Activated naive CD4-positive, alpha-beta T cell treated with anti-CD3 and anti-CD28 coated beads, Interleukin-2, amount 10 ng/mL, durations not matched to agents 7 days and 5 days (primary cell): ENCODE measurements at regions of chr14 and their contacts with region 1.

Region 1: DNA sequence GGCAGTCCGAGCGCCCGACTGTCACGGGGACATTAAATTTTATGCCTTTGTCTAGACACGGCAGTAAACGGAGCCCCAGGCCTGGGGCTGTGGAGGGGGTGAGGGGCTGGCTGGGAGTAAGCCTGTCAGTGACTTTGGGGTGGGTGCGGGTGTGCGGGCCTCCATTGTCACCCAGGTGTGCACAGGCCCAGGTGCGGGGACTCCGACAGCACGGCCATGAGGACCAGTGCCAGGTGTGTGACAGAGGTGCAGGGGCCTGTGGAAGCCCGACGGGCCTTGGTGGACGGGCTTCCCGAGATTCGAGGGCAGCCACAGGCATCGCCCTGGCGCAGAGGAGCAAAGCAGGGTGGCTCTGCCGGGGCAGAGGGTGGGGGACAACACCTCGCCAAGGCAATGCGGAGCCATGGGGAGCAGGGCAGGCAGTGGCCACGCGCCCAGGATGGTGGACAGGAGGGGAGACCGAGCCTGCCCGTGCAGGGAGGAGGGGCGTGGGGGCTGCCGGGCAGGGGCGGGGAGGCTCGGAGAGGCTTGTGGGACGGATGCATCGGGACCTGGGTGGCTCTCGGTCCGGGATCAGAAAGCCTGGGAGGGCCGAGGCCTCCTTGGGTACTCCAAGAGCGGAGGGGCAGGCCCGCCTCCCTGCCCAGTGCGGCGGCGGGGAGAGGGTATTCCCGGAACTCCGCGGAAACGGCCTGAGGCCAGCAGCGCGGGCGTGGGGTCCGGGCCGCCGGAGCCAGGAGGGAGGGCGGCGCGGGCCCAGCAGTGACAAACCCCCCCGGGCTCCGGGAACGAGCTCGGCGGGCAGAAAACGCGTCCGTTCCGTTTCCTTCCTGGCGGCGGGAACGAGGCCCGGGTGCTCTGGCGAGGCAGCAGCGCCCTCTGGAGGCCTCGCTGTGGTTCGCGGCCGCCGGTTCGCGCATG is 1.5 kb downstream of the TMEM121 start:
- DNase-seq: peak; percentile 86
- H3K4me3 Mint-ChIP-seq: peak overlapping the region; percentile 69
- H3K27ac Mint-ChIP-seq: no peak overlapping the region
- H3K4me1 Mint-ChIP-seq: peaks cover 31% of the 10 kb centered on the region
- H3K27me3 Mint-ChIP-seq: peaks cover 63% of the 10 kb centered on the region

Region 2: GRCh38 chr14:105374383-105374782 is 153.5 kb before region 1 on chr14:
- CTCF ChIA-PET with region 1: interaction called, 12 read pairs
- DNase-seq: no peak
- H3K4me3 Mint-ChIP-seq: no peak overlapping the region
- H3K27ac Mint-ChIP-seq: no peak overlapping the region
- H3K4me1 Mint-ChIP-seq: peaks cover 23% of the 10 kb centered on the region
- H3K27me3 Mint-ChIP-seq: no peaks in the 10 kb centered on the region

Region 3: GRCh38 chr14:105388110-105388951 is 139.6 kb before region 1 on chr14:
- CTCF ChIA-PET with region 1: no interaction called
- DNase-seq: no peak
- H3K4me3 Mint-ChIP-seq: no peak overlapping the region
- H3K27ac Mint-ChIP-seq: no peak overlapping the region
- H3K4me1 Mint-ChIP-seq: peaks cover 15% of the 10 kb centered on the region
- H3K27me3 Mint-ChIP-seq: no peaks in the 10 kb centered on the region

Region 4: GRCh38 chr14:105480952-105481801 is 46.7 kb before region 1 on chr14:
- CTCF ChIA-PET with region 1: interaction called, 19 read pairs
- DNase-seq: peak; percentile 89
- H3K4me3 Mint-ChIP-seq: peak overlapping the region; percentile 47
- H3K27ac Mint-ChIP-seq: peak overlapping the region; percentile 93
- H3K4me1 Mint-ChIP-seq: peaks cover 57% of the 10 kb centered on the region
- H3K27me3 Mint-ChIP-seq: peaks cover 68% of the 10 kb centered on the region

Region 5: DNA sequence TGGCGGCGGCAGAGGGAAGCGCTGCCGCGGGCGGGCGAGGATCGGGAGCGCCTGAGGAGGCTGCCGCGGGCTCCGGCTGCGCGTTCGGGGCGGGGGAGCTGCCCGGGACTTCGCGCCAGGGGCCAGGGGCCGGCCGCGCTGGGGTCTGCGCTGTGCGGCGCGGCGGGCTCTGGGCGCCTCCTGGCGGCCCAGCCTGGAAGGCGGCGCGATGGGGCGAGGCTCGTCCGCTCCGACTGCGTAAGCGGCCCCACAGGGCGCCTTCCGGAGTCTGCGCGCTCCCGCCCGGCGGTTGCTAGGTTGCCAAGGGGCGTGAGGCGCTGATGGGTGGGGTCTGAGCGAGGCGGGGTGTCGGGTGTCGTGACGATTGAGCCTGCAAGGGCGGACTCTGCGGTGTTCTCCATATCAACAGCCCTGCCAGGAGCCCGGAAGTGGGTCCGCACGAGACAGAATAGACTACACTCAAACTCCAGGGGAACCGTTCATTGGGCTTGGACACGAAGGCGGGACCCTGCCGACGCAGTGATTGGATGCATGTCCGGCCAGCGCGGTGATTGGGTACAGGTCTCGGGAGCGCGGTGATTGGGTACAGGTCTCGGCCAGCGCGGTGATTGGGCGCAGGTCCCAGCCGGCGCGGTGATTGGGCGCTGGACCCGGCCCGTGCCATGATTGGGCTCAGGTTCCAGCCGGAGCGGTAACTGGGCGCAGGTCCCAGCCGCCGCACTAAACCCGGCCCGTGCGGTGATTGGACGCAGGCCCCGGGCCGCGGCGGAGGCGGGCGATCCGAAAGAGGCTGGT is 37.2 kb before region 1 on chr14 and contains the start of gene TEDC1:
- CTCF ChIA-PET with region 1: interaction called, 12 read pairs
- DNase-seq: peak; percentile 100
- H3K4me3 Mint-ChIP-seq: peak within 1 kb of the TSS; percentile 90
- H3K27ac Mint-ChIP-seq: peak within 1 kb of the TSS; percentile 95
- H3K4me1 Mint-ChIP-seq: peaks cover 35% of the 10 kb centered on the region
- H3K27me3 Mint-ChIP-seq: peaks cover 17% of the 10 kb centered on the region